Endothelial cell of umbilical vein (primary cell): ENCODE measurements at regions of chr20 and their contacts with region 1.

Region 1: DNA sequence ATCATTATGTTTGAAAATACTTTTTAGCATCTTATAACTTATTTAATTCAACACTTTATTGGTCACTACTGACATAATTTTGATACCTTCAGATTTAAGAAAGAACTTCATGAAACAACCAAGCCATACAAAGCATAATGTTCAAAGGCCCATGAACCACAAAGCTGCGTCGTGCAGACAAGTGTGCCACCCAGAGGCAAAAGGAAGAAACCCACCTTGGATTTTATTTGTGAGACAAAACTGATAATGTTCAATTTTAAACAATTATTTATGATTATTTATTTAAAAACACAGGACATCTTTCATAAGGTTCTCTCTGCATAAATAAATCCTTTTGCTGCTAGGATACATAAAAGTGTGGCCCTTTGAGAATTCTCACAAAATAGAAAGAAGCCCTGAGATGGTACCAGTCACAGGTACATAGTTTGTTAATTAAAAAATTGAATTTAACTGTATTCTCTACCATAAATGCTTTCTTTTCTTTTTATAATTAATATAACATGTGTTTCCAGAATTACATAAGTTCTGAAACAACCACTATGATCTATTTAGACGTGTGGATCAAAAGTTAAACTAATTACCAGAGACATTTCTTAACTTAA is 143.7 kb downstream of the RALGAPA2 start:
- DNase-seq: peak; percentile 42
- H3K4me3 ChIP-seq: no peak overlapping the region
- H3K27ac ChIP-seq: no peak overlapping the region
- H3K4me1 ChIP-seq: no peaks in the 10 kb centered on the region
- H3K27me3 ChIP-seq: no peaks in the 10 kb centered on the region
- CTCF ChIP-seq: peak; percentile 56 to 60
- POLR2A ChIP-seq: no peak

Region 2: DNA sequence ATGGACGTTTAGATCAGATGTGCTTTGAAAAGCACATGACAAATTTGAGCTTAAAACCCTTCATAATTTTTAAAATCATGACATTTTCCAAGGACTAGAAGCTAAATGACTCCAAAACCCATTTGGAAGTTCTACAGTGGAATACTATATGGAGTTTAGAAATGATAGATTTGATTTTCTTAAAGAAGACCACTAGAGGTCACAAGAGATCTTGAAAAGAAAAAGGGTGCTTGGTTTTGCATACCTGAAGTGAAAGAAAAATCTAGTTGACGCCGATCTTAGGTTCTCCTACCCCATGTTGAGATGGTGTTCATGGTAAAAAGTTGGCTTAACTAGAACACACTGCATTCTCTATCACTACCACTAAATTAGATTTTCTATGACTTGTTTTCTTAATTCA is 484.9 kb before region 1 on chr20:
- CTCF ChIA-PET with region 1: no interaction called
- POLR2A ChIA-PET with region 1: no interaction called
- dilution Hi-C with region 1: no loop called
- intact Hi-C with region 1: loop called (anchors 1 kb)
- DNase-seq: peak; percentile 33
- H3K4me3 ChIP-seq: no peak overlapping the region
- H3K27ac ChIP-seq: no peak overlapping the region
- H3K4me1 ChIP-seq: no peaks in the 10 kb centered on the region
- H3K27me3 ChIP-seq: peaks cover 5 to 15% of the 10 kb centered on the region in 2 experiments
- CTCF ChIP-seq: peak in 1 of 2 donors; percentile 13
- POLR2A ChIP-seq: no peak

Region 3: DNA sequence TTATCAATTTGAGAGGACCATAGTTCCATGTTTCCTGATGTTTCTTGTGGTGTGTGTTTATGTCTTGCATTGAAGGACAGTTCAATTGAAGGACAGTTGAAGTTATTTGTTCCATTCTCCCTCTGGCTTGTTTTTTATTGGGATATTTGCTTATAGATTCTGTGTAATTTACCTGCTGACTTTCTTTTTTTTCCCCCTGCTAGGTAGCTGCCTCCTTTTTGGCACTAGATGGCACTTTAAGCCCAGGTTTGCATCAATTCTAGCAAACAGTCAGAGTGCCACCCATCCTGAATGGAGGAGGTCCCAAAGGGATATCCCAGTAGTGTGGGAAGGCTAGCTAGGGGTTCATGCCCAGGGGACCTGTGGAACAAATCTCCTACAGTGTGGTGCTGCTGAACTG is 438.3 kb before region 1 on chr20:
- CTCF ChIA-PET with region 1: interaction called, 3 read pairs
- POLR2A ChIA-PET with region 1: no interaction called
- dilution Hi-C with region 1: no loop called
- intact Hi-C with region 1: loop called (anchors 1 kb)
- DNase-seq: peak; percentile 12
- H3K4me3 ChIP-seq: no peak overlapping the region
- H3K27ac ChIP-seq: no peak overlapping the region
- H3K4me1 ChIP-seq: peaks cover 6% of the 10 kb centered on the region
- H3K27me3 ChIP-seq: peaks cover 1 to 4% of the 10 kb centered on the region in 2 experiments
- CTCF ChIP-seq: peak in 1 of 2 donors; percentile 1
- POLR2A ChIP-seq: no peak

Region 4: GRCh38 chr20:20184149-20184548 is 384.6 kb before region 1 on chr20:
- CTCF ChIA-PET with region 1: no interaction called
- POLR2A ChIA-PET with region 1: no interaction called
- dilution Hi-C with region 1: no loop called
- intact Hi-C with region 1: loop called (anchors 1 kb)
- DNase-seq: no peak
- H3K4me3 ChIP-seq: no peak overlapping the region
- H3K27ac ChIP-seq: no peak overlapping the region
- H3K4me1 ChIP-seq: no peaks in the 10 kb centered on the region
- H3K27me3 ChIP-seq: no peaks in the 10 kb centered on the region
- CTCF ChIP-seq: peak; percentile 15 to 20
- POLR2A ChIP-seq: no peak

Region 5: DNA sequence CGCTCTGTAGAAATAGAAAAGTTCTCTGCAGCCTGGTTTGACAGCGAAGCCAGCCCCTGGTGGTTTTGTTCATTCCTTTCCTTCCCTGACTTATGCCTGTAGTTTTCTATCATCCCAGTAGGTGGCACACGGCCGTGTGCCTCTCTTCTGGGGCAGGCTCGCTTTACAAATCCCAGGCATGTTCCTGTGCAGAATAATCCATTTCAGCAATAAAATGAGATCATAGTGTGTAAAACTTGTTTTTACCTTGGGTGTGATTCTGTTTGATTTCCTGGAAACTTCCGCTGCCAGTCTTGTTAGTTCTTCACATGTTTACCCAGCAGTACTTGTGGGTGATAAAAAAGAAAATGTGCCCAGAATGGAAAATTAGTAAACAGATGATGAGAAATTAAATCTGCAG is 208.2 kb before region 1 on chr20:
- CTCF ChIA-PET with region 1: interaction called, 7 read pairs
- POLR2A ChIA-PET with region 1: no interaction called
- dilution Hi-C with region 1: no loop called
- intact Hi-C with region 1: loop called (anchors 1 kb)
- DNase-seq: peak; percentile 69
- H3K4me3 ChIP-seq: no peak overlapping the region
- H3K27ac ChIP-seq: no peak overlapping the region
- H3K4me1 ChIP-seq: no peaks in the 10 kb centered on the region
- H3K27me3 ChIP-seq: peaks cover 43 to 54% of the 10 kb centered on the region in 2 experiments
- CTCF ChIP-seq: peak; percentile 69 to 85
- POLR2A ChIP-seq: no peak

Region 6: GRCh38 chr20:20580139-20580538 is 11.4 kb after region 1 on chr20:
- CTCF ChIA-PET with region 1: interaction called, 13 read pairs
- POLR2A ChIA-PET with region 1: no interaction called
- dilution Hi-C with region 1: no loop called
- intact Hi-C with region 1: no loop called
- DNase-seq: no peak
- H3K4me3 ChIP-seq: no peak overlapping the region
- H3K27ac ChIP-seq: no peak overlapping the region
- H3K4me1 ChIP-seq: no peaks in the 10 kb centered on the region
- H3K27me3 ChIP-seq: no peaks in the 10 kb centered on the region
- CTCF ChIP-seq: no peak
- POLR2A ChIP-seq: no peak

Region 7: GRCh38 chr20:20624914-20625313 is 56.2 kb after region 1 on chr20:
- CTCF ChIA-PET with region 1: no interaction called
- POLR2A ChIA-PET with region 1: no interaction called
- dilution Hi-C with region 1: no loop called
- intact Hi-C with region 1: no loop called
- DNase-seq: no peak
- H3K4me3 ChIP-seq: no peak overlapping the region
- H3K27ac ChIP-seq: no peak overlapping the region
- H3K4me1 ChIP-seq: no peaks in the 10 kb centered on the region
- H3K27me3 ChIP-seq: no peaks in the 10 kb centered on the region
- CTCF ChIP-seq: no peak
- POLR2A ChIP-seq: no peak

Region 8: GRCh38 chr20:20837574-20838021 is 268.9 kb after region 1 on chr20:
- CTCF ChIA-PET with region 1: no interaction called
- POLR2A ChIA-PET with region 1: no interaction called
- dilution Hi-C with region 1: no loop called
- intact Hi-C with region 1: no loop called
- DNase-seq: peak; percentile 59
- H3K4me3 ChIP-seq: no peak overlapping the region
- H3K27ac ChIP-seq: no peak overlapping the region
- H3K4me1 ChIP-seq: no peaks in the 10 kb centered on the region
- H3K27me3 ChIP-seq: peaks cover 0 to 3% of the 10 kb centered on the region in 2 experiments
- CTCF ChIP-seq: peak; percentile 64 to 77
- POLR2A ChIP-seq: no peak

Region 9: GRCh38 chr20:21682521-21682954 is 1113.8 kb after region 1 on chr20:
- CTCF ChIA-PET with region 1: no interaction called
- POLR2A ChIA-PET with region 1: no interaction called
- dilution Hi-C with region 1: no loop called
- intact Hi-C with region 1: no loop called
- DNase-seq: no peak
- H3K4me3 ChIP-seq: no peak overlapping the region
- H3K27ac ChIP-seq: no peak overlapping the region
- H3K4me1 ChIP-seq: no peaks in the 10 kb centered on the region
- H3K27me3 ChIP-seq: no peaks in the 10 kb centered on the region
- CTCF ChIP-seq: no peak
- POLR2A ChIP-seq: no peak